ENCODE measurements at regions of chrX and their contacts with region 1.

Region 1: GRCh38 chrX:73758250-73758649 is 195.3 kb downstream of the CHIC1 start:
- DNase-seq: no peak
- H3K4me3 Mint-ChIP-seq: no peak overlapping the region
- H3K27ac Mint-ChIP-seq: no peak overlapping the region
- H3K4me1 Mint-ChIP-seq: no peaks in the 10 kb centered on the region
- H3K27me3 Mint-ChIP-seq: no peaks in the 10 kb centered on the region
- CTCF ChIP-seq: no peak

Region 2: GRCh38 chrX:73366696-73367095 is 391.6 kb before region 1 on chrX:
- CTCF ChIA-PET with region 1: no interaction called
- intact Hi-C with region 1: loop called (anchors 5 kb)
- DNase-seq: no peak
- H3K4me3 Mint-ChIP-seq: no peak overlapping the region
- H3K27ac Mint-ChIP-seq: no peak overlapping the region
- H3K4me1 Mint-ChIP-seq: no peaks in the 10 kb centered on the region
- H3K27me3 Mint-ChIP-seq: no peaks in the 10 kb centered on the region
- CTCF ChIP-seq: no peak

Region 3: DNA sequence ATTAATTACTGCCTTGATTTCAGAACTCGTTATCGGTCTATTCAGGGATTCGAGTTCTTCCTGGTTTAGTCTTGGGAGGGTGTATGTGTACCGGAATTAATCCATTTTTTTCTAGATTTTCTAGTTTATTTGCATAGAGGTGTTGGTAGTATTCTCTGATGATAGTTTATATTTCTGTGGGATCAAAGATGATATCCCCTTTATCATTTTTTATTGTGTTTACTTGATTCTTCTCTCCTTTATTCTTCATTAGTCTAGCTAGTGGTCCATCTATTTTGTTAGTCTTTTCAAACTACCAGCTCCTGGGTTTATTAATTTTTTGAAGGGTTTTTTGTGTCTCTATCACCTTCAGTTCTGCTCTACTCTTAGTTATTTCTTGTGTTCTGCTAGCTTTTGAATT is 279.3 kb before region 1 on chrX:
- CTCF ChIA-PET with region 1: no interaction called
- intact Hi-C with region 1: no loop called
- DNase-seq: no peak
- H3K4me3 Mint-ChIP-seq: no peak overlapping the region
- H3K27ac Mint-ChIP-seq: no peak overlapping the region
- H3K4me1 Mint-ChIP-seq: no peaks in the 10 kb centered on the region
- H3K27me3 Mint-ChIP-seq: no peaks in the 10 kb centered on the region
- CTCF ChIP-seq: no peak

Region 4: DNA sequence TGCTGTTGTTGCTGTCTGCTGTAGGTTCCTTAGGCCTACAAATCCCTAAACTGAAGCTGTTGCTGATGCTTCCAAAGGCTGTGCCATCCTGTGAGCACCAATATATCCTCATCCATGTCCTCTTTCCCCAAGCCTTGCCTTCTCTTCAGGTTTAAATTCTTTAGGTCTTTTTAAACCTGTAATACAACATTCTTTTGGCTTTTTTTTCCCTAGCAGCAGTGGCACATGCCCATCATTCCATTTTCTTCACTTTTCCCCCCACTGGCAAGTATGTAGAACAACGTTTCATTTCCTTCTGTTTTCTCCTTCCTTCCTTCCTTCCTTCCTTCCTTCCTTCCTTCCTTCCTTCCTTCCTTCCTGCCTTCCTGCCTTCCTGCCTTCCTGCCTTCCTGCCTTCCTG is 908.0 kb after region 1 on chrX:
- CTCF ChIA-PET with region 1: no interaction called
- intact Hi-C with region 1: no loop called
- DNase-seq: no peak
- H3K4me3 Mint-ChIP-seq: no peak overlapping the region
- H3K27ac Mint-ChIP-seq: no peak overlapping the region
- H3K4me1 Mint-ChIP-seq: no peaks in the 10 kb centered on the region
- H3K27me3 Mint-ChIP-seq: no peaks in the 10 kb centered on the region
- CTCF ChIP-seq: no peak